ENCODE measurements at regions of chr2 and their contacts with region 1.

Region 1: DNA sequence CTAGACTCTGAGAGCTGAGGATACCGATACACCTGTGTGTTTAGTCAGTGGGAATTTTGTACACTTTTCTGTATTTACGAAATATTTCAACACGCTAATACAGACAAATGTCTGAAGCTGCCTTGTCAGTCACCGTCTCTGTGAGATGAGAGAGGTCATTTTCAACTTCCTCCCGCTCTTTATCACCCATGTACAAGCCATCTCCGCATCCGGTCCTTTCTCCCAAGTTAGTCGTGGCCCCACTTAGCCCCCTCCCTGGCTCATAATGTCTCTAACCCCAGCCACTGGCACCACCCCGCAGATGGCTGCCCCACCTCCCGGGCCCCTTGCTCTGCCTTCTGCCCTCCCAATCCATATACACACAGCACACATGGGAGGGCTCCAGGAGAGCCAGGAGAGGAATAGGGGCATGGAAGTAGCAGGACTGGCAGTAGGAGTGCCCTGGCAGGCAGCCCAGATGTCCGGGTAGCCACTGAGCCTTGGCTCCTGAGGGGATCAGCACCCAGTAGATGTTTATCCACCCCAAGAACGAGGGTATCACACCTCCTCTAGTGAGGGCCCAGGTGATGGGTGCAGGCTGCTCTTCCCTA is 2.0 kb upstream of the RUFY4 start:
- DNase-seq: no peak
- H3K4me3 ChIP-seq: no peak overlapping the region
- H3K27ac ChIP-seq: no peak overlapping the region
- H3K27me3 ChIP-seq: peaks cover 60% of the 10 kb centered on the region
- CTCF ChIP-seq: no peak

Region 2: DNA sequence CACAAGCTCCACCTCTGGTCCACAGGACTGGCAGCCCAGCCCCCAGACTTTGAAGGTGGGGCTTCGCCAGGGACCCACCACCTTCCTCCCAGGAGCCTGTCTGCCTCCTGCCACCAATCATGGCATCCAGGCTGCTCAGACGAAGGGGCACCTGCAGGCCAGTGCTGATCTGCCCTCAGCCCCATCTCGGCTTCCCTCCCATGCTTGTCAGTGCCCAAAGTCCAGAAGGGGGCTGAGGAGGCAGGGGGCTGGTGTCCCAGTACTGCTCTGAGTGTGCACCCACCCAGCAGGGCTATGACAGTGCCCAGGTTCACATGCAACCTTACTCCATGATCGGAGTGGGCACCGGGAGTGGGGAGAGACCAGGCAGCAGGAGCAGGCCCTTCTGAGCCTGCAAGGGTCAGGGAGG is 23.3 kb before region 1 on chr2:
- CTCF ChIA-PET with region 1: interaction called, 10 read pairs
- POLR2A ChIA-PET with region 1: no interaction called
- DNase-seq: no peak
- H3K4me3 ChIP-seq: no peak overlapping the region
- H3K27ac ChIP-seq: no peak overlapping the region
- H3K27me3 ChIP-seq: peaks cover 38% of the 10 kb centered on the region
- CTCF ChIP-seq: no peak

Region 3: GRCh38 chr2:218081063-218081462 is 14.0 kb after region 1 on chr2:
- CTCF ChIA-PET with region 1: interaction called, 27 read pairs
- POLR2A ChIA-PET with region 1: no interaction called
- DNase-seq: no peak
- H3K4me3 ChIP-seq: no peak overlapping the region
- H3K27ac ChIP-seq: no peak overlapping the region
- H3K27me3 ChIP-seq: peaks cover 3% of the 10 kb centered on the region
- CTCF ChIP-seq: no peak

Region 4: GRCh38 chr2:218476676-218477075 is 409.7 kb after region 1 on chr2:
- CTCF ChIA-PET with region 1: no interaction called
- POLR2A ChIA-PET with region 1: no interaction called
- DNase-seq: no peak
- H3K4me3 ChIP-seq: no peak overlapping the region
- H3K27ac ChIP-seq: no peak overlapping the region
- H3K27me3 ChIP-seq: no peaks in the 10 kb centered on the region
- CTCF ChIP-seq: no peak

Region 5: DNA sequence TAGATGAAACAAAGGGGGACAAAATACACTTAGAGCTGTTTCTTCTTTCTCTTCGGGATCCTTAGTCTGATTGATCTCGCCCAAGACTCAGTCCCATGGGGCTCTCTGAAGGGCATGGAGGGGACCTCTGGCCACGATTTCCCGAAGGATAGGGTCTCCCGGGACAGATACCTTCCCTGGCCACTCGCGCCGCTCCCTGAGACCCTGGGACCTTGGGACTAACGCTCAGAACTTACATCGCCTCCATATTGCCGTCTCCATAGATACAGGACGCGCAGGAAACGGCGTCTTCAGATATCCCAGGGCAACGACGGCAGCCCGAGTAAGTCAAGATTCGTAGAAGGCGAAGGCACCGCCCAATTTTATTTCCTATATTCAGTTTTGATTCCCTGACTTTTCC is 974.2 kb after region 1 on chr2 and contains the start of gene CFAP65:
- CTCF ChIA-PET with region 1: no interaction called
- POLR2A ChIA-PET with region 1: no interaction called
- DNase-seq: peak; percentile 20
- H3K4me3 ChIP-seq: peak within 1 kb of the TSS; percentile 64
- H3K27ac ChIP-seq: no peak within 1 kb of the TSS
- H3K27me3 ChIP-seq: peaks cover 26% of the 10 kb centered on the region
- CTCF ChIP-seq: no peak
- polyA plus RNA-seq, gene CFAP65: not detected in 2 replicates

Measured in AG04450 (cell line).